ENCODE measurements at regions of chr15 and their contacts with region 1.

Region 1: DNA sequence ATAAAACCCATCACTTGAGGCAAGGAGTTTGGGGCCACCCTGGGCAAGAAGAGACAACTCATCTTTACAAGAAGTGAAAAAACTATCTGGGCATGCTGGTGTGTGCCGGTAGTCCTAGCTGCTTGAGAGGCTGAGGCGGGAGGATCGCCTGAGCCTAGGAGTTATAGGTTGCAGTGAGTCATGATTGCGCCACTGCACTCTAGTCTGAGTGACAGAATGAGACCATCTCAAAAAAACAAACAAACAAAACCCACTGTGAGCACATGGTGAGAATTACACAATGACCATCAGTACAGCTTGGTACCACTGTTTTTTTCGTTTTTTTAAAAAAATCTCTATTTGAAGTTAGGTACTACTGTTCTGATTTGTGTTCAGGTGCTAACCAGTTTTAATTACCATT is 13.6 kb downstream of the VPS39 start:
- DNase-seq: no peak
- H3K4me3 Mint-ChIP-seq: no peak overlapping the region
- H3K27ac Mint-ChIP-seq: peak overlapping the region; percentile 38
- H3K4me1 Mint-ChIP-seq: peaks cover 34% of the 10 kb centered on the region
- H3K27me3 Mint-ChIP-seq: no peaks in the 10 kb centered on the region

Region 2: DNA sequence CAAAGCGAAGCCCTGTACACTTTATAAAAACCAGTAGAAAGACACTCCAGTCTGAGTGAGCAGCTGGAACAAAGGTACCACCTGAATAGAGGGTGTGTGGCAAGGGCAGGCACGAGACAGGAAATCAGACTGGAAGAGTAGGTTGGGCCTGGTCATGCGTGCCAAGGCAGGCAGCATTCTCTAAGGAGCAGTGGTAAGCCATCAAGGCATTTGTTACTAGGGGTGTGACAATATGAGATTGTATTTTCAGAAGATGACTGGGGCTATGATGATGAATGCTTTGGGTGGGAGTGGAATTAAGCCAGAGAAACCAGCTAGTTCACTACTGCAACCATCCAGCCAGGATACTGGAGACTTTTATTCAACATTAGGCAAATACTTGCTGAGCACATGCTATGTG is 361.6 kb before region 1 on chr15:
- intact Hi-C with region 1: no loop called
- DNase-seq: no peak
- H3K4me3 Mint-ChIP-seq: no peak overlapping the region
- H3K27ac Mint-ChIP-seq: no peak overlapping the region
- H3K4me1 Mint-ChIP-seq: peaks cover 37% of the 10 kb centered on the region
- H3K27me3 Mint-ChIP-seq: no peaks in the 10 kb centered on the region

Region 3: DNA sequence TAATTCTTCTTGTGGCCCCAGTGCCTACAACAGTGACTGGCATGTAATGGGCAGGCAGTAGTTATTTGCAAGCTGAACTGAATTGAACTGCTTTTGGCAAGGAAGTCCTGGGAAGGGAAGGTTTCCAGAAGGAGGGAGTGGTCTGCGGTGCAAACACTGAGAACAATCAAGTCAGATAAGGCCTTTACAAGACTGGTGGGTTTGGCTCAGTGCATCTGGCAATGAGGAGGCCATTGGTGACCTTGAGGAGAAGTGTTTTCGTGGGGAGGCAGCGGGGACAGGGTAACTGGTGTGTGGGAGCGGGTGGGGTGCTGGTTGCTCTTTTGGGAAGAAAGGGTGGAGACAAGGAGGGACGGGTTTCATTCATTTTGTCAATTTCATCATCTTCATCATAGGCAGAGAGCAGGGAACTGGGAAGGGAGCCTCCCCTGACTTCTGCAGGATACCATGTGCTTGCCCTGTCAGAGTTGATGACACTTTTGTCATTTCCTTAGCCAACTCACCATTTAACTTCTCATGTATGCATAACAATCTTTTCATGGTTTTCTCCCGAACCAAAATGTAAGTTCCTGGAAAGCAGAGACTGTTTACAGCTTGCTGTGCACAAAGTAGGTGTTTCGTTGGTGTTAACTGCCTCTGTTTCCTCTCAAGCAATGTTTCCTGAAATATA is 213.7 kb before region 1 on chr15:
- intact Hi-C with region 1: no loop called
- DNase-seq: no peak
- H3K4me3 Mint-ChIP-seq: no peak overlapping the region
- H3K27ac Mint-ChIP-seq: no peak overlapping the region
- H3K4me1 Mint-ChIP-seq: peaks cover 14% of the 10 kb centered on the region
- H3K27me3 Mint-ChIP-seq: peaks cover 4% of the 10 kb centered on the region

Region 4: GRCh38 chr15:42207674-42208579 is 13.4 kb after region 1 on chr15 and contains the start of gene VPS39:
- intact Hi-C with region 1: loop called (anchors 2 kb)
- DNase-seq: peak; percentile 81
- H3K4me3 Mint-ChIP-seq: peak within 1 kb of the TSS; percentile 98
- H3K27ac Mint-ChIP-seq: peak within 1 kb of the TSS; percentile 98
- H3K4me1 Mint-ChIP-seq: peaks cover 29% of the 10 kb centered on the region
- H3K27me3 Mint-ChIP-seq: no peaks in the 10 kb centered on the region
- total RNA-seq, gene VPS39: 67.7 and 70.6 TPM in 2 replicates